ENCODE measurements at regions of chr3 and their contacts with region 1.

Region 1: DNA sequence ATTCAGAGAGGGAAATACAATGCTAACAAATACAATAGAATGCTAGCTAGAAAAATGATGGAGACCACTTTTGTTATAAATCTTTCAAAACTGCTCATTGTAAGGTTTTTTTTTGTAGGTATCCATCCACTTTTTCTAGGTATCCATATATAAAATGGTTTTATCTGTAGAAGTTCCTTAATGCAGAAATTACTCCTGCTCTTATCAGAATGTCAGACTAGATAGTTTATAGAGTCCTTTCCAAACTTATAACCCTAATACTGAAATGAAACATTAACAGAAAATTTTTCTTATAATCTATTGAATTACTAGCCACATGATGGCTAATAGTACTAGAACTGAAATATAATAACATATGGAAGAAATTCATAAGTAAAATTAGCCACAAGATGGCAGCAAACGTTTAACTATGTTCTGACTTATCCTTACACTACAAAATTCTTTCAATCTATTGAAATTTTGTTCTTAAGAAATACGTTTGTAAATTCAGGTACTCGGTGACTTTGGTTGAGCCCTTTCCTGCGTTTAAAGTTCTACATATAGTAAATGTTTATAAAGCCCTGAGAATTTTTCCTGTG is 58.5 kb downstream of the ECT2 start:
- DNase-seq: peak in 5 of 9 donors; percentile 1 to 12 (median 8)
- ATAC-seq: no peak
- H3K4me3 ChIP-seq: no peak overlapping the region
- H3K4me3 Mint-ChIP-seq: no peak overlapping the region
- H3K27ac ChIP-seq: no peak overlapping the region
- H3K27ac Mint-ChIP-seq: no peak overlapping the region
- H3K4me1 ChIP-seq: no peaks in the 10 kb centered on the region
- H3K4me1 Mint-ChIP-seq: peaks cover 0 to 3% (median 0%) of the 10 kb centered on the region in 7 donors
- H3K27me3 ChIP-seq: no peaks in the 10 kb centered on the region
- H3K27me3 Mint-ChIP-seq: no peaks in the 10 kb centered on the region

Region 2: DNA sequence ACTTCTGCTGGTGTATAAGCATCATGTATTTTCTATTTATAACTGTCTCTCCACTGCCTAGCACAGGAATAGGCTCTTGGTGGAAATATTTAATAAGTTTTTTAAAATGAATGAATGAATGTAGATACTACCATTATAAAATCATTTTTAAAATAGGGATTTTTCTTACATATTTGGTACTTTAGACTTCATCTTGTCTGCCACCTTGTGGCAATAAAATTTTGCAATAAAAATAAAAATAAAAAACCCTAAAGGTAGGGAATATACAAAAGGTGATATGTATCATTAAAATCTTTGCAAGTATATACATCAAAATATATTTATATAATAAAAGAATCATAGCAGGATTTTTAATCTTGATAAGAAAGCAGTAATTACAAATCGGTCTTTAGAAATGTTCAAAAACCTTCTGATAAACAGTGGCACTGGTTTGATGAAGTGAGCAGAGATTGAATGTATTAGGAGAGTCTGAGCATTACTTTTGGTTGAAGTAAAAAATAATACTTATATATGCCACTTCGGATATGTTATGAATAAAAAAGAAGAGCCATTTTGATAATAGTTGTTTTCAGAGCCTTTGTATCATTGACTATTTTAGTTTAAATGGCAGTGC is 236.8 kb after region 1 on chr3:
- CTCF ChIA-PET with region 1: no interaction called
- POLR2A ChIA-PET with region 1: no interaction called
- intact Hi-C with region 1: loop called in 1 of 2 experiments (anchors 5 kb)
- DNase-seq: no peak
- ATAC-seq: no peak
- H3K4me3 ChIP-seq: no peak overlapping the region
- H3K4me3 Mint-ChIP-seq: no peak overlapping the region
- H3K27ac ChIP-seq: no peak overlapping the region
- H3K27ac Mint-ChIP-seq: no peak overlapping the region
- H3K4me1 ChIP-seq: no peaks in the 10 kb centered on the region
- H3K4me1 Mint-ChIP-seq: no peaks in the 10 kb centered on the region
- H3K27me3 ChIP-seq: no peaks in the 10 kb centered on the region
- H3K27me3 Mint-ChIP-seq: no peaks in the 10 kb centered on the region